AG04449 (cell line): ENCODE measurements at regions of chr5 and their contacts with region 1.

Region 1: GRCh38 chr5:133996683-133997252 is 8.0 kb downstream of the VDAC1 start:
- DNase-seq: no peak
- H3K4me3 ChIP-seq: no peak overlapping the region
- CTCF ChIP-seq: peak; percentile 53

Region 2: GRCh38 chr5:133944263-133945185 is 52.2 kb before region 1 on chr5:
- CTCF ChIA-PET with region 1: no interaction called
- POLR2A ChIA-PET with region 1: no interaction called
- DNase-seq: no peak
- H3K4me3 ChIP-seq: no peak overlapping the region
- CTCF ChIP-seq: peak; percentile 70

Region 3: DNA sequence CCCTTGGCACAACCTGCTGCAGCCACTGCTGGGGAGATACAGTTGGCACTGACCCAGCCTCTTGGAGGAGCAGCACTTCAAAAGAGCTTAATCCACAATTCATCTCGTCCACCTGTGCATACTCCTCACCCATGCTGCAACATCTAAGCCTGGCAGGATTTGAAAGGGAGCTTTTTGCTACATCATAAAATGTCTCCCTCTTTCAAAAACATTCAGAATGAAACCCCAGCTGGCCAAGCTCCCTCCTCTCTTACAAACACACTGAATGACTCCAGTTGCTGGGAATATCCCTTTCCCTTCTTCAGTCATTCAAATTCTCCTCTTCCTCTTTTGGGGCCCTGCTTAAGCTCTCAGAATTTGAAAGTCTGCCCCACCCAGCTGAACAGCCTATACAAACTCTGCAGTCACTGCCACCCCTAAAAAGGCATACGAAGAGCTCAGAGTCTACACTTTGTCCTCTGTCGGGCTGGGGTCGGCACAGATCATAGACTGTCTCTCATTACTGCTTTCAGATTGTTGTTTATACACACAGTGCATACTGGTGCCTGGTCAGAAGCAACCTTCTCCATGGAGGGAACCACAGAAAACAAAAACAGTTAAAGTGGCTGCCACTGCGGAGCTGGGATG is 19.5 kb before region 1 on chr5:
- CTCF ChIA-PET with region 1: interaction called, 72 read pairs
- POLR2A ChIA-PET with region 1: no interaction called
- DNase-seq: no peak
- H3K4me3 ChIP-seq: no peak overlapping the region
- CTCF ChIP-seq: no peak

Region 4: DNA sequence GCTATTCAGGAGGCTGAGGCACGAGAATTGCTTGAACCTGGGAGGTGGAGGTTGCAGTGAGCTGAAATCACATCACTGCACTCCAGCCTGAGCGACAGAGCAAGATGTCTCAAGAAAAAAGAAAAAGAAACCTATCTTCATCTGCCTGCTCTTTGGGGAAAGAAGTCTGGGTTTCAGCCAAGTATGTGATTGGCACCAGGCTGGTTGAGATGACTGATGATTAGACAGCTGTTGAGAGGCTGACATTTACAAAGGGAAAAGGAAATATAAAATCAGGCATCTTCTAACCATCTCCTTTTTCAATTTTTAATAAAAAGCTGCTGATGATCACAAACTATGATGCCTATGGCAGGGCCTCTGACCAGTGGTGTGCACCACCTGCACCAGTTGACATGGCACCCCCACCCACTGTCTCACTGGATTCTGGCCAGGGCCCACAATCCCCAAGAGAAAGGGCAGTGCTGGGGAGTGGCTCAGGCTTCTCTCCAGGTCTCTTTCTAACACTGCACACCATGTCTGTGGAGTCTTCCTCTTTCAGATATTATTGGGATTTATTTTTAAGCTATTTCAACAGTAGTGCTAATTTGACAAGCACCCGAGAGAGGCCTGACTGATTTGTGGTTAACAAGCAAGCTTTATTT is 11.1 kb before region 1 on chr5:
- CTCF ChIA-PET with region 1: interaction called, 72 read pairs
- POLR2A ChIA-PET with region 1: interaction called, 3 read pairs
- DNase-seq: no peak
- H3K4me3 ChIP-seq: no peak overlapping the region
- CTCF ChIP-seq: no peak